Activated naive CD4-positive, alpha-beta T cell treated with anti-CD3 and anti-CD28 coated beads for 36 hours (primary cell): ENCODE measurements at regions of chr10 and their contacts with region 1.

Region 1: DNA sequence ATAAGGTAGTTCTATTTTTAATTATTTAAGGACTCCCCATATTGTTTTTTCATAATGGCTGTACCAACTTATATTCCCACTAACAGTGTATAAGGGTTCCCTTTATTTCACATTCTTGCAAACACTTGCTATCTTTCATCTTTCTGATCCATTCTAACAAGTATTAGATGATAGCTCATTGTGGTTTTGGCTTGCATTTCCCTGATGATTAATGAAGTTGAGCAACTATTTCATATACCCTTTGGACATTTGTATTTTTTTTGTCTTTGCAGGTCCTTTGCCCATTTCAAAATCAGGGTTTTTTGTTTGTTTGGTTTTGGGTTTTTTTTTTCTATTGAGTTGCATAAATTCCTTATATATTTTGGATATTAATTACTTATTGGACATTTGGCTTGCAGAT is 107.2 kb downstream of the EPC1 start:
- DNase-seq: no peak
- H3K4me3 Mint-ChIP-seq: no peak overlapping the region
- H3K27ac Mint-ChIP-seq: no peak overlapping the region
- H3K4me1 Mint-ChIP-seq: peaks cover 9% of the 10 kb centered on the region
- H3K27me3 Mint-ChIP-seq: no peaks in the 10 kb centered on the region

Region 2: GRCh38 chr10:32149252-32149955 is 90.4 kb before region 1 on chr10:
- CTCF ChIA-PET with region 1: no interaction called
- intact Hi-C with region 1: loop called (anchors 1 kb)
- DNase-seq: peak; percentile 34
- H3K4me3 Mint-ChIP-seq: no peak overlapping the region
- H3K27ac Mint-ChIP-seq: no peak overlapping the region
- H3K4me1 Mint-ChIP-seq: peaks cover 21% of the 10 kb centered on the region
- H3K27me3 Mint-ChIP-seq: no peaks in the 10 kb centered on the region

Region 3: GRCh38 chr10:32332299-32332750 is 92.6 kb after region 1 on chr10:
- CTCF ChIA-PET with region 1: no interaction called
- intact Hi-C with region 1: loop called (anchors 1 kb)
- DNase-seq: peak; percentile 89
- H3K4me3 Mint-ChIP-seq: peak overlapping the region; percentile 55
- H3K27ac Mint-ChIP-seq: peak overlapping the region; percentile 90
- H3K4me1 Mint-ChIP-seq: peaks cover 94% of the 10 kb centered on the region
- H3K27me3 Mint-ChIP-seq: no peaks in the 10 kb centered on the region

Region 4: DNA sequence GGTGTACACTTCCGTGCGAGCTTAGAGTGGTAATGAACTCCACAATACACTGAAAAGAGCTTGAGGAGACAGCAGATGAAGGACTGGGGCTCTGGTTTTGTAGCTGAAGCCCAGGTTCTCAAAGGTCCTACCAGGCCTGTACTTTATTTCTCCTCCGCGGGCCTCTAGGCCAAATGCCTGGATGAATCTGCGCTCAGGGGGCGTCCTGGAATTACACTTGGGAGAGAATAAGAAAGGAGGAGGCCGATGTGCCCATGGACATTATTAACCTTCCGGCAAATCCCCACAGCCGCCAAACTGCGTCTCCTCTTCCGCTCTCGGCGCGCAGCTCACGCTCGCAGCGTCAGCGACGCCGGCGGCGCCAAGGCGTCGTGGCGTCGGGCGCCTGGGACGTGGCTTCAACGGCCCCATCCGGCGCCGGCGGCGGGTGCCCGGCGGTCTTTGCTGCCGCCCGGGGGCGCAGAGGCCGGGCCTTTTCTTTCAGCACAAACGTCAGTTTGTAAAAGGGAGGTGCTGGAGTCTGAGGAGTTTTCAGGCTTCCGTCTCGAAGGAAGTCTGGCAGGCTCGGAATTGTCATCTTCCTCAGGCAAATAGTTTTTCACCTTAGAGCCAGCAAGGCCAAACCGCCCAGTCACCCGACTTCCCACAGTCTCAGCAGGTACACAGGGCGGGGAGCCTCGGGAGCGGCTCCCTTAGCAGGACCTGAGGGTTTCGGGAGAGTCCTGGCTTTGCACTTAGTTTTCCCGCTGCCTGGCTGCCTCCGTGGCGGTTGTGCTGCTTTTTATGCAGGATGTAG is 206.2 kb after region 1 on chr10 and contains the start of gene CCDC7:
- CTCF ChIA-PET with region 1: interaction called, 3 read pairs
- intact Hi-C with region 1: loop called (anchors 1 kb)
- DNase-seq: peak; percentile 85
- H3K4me3 Mint-ChIP-seq: peak within 1 kb of the TSS; percentile 94
- H3K27ac Mint-ChIP-seq: peak within 1 kb of the TSS; percentile 98
- H3K4me1 Mint-ChIP-seq: peaks cover 14% of the 10 kb centered on the region
- H3K27me3 Mint-ChIP-seq: no peaks in the 10 kb centered on the region
- total RNA-seq, gene CCDC7: 6.8 to 8.9 TPM

Region 5: DNA sequence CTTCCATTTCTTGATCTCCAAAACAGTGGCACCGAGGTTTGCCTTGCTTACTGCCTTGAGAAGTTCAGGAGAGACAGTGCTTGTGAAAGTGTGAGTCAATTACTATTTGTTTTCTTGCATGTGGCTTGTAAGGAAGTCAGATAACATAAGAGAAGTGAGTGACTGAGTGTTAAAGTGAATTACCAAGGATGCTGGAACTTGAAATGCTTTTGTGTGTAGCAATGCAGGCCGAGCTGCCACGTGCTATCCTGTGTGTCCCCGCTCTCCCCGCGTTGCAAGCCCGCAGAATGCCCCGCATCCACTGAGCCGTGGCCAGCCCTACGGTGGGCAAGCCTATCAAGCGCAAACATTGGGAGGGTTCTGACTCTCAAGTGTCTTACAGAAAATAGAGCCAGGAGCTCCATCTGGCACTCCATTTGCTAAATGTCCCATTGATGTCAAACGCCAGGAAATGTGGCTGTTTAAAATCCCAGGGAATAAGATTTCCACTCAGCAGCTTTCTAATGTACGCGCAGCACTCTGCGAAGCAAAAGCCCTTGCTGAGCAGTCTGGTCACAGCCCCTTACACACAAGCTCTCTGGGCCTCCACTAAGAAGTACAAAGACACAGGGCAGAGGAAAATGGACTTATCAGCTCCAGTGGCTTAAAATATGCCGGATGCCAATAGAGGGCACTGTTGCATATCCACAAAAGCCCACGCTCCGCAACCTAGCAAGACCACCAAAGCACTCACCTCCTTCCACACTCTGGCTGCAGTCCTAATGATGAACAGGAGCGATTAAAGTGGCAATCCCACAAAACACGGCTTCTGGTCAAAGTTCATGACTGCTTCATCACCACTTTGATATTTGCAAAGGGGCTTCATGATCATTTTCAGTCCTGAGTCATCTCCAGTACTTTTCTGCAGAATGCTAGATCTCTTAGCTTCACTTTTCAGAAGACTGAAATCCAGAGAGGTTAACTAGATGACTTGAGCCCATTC is 876.3 kb after region 1 on chr10:
- CTCF ChIA-PET with region 1: no interaction called
- intact Hi-C with region 1: loop called (anchors 1 kb)
- DNase-seq: no peak
- H3K4me3 Mint-ChIP-seq: no peak overlapping the region
- H3K27ac Mint-ChIP-seq: no peak overlapping the region
- H3K4me1 Mint-ChIP-seq: peaks cover 60% of the 10 kb centered on the region
- H3K27me3 Mint-ChIP-seq: no peaks in the 10 kb centered on the region